ENCODE measurements at regions of chr12 and their contacts with region 1.

Region 1: GRCh38 chr12:69585189-69586062 is at the start of gene CCT2:
- DNase-seq: peak; percentile 97
- H3K4me3 ChIP-seq: peak within 1 kb of the TSS; percentile 16 to 98 (median 97)
- H3K27ac ChIP-seq: peak within 1 kb of the TSS; percentile 61
- H3K4me1 ChIP-seq: peaks cover 8% of the 10 kb centered on the region
- H3K27me3 ChIP-seq: no peaks in the 10 kb centered on the region
- CTCF ChIP-seq: peak in 1 of 2 donors; percentile 62
- POLR2A ChIP-seq: peak; percentile 93
- total RNA-seq, gene CCT2: 245 and 256 TPM in 2 replicates

Region 2: DNA sequence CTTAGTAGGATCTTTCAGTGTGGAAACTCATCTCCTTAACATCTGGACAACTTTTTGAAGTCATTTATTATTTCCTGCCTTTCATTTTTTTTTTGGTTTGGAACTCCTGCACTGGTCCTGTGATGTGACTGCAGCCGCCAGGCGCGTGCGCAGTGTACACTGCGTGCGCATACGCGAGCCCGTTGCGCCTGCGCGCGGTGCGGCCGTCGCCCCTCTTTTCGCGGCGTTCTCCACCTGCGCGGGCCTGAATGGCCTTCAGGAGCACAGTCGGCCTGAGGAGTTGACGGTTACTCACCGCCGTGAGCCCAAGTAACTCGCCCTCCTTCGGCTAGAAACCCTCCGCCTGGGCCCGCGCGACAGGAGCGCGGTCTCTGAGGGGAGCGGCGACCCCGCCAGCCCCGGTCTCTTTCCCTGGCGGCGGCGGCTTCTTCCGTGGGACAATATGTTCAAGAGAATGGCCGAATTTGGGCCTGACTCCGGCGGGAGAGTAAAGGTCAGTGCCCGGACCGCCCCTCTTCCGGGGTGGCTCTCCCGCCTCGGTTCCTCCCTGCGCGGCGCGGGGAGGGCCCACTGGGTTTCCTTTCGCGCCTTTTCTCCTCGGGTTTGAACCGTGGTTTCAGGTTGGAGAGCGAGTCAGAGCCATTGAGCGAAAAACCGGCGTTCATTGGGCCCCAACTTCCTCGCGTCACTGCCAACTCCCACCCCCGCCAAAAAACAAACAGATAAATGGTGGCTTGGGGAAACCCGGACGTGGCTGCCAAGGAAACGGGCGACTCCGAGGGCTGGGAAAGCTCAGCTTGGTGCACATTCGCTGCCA is 225.7 kb before region 1 on chr12 and contains the start of gene YEATS4:
- CTCF ChIA-PET with region 1: interaction called, 6 read pairs
- POLR2A ChIA-PET with region 1: no interaction called
- dilution Hi-C with region 1: no loop called
- intact Hi-C with region 1: loop called (anchors 1 kb)
- DNase-seq: peak; percentile 92
- H3K4me3 ChIP-seq: peak within 1 kb of the TSS; percentile 6 to 89 (median 65)
- H3K27ac ChIP-seq: peak within 1 kb of the TSS; percentile 69
- H3K4me1 ChIP-seq: peaks cover 7% of the 10 kb centered on the region
- H3K27me3 ChIP-seq: no peaks in the 10 kb centered on the region
- CTCF ChIP-seq: no peak
- POLR2A ChIP-seq: peak; percentile 68
- total RNA-seq, gene YEATS4: 16.5 and 16.7 TPM in 2 replicates

Region 3: DNA sequence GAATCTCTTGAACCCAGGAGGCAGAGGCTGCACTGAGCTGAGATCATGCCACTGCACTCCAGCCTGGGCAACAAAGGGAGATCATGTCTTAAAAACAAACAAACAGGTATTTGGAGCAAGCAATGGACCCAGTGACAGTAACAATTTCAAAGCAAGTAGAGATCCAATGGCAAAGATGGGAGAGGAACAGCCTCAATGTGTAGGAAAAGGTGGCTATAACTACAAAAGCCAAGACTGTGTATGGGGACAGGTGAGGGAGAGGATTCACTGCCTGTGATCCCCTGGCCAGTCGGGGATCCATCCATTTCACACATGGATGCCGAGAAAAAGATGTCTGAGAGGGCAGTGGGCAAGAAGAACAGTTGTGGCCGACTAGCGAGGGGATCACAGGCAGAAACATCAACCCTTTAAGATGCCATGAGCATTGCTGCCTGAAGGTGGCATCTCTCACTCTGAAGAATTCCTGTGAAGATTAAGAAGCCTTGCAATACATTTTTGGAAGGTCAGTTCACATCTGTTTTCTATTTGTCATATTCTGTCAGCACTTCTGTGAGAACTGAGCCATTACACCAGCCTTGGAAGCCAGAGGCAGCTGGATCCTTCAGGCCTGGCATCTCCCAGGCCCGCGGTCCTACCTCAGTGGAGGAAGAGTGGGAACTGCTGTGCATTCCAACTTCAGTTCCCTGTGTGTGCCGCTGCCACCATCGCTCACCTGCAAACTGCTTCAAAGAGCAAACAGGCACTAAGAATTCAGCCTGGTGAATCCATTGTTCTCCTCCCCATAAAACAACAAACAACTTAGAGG is 169.8 kb before region 1 on chr12:
- CTCF ChIA-PET with region 1: no interaction called
- POLR2A ChIA-PET with region 1: no interaction called
- dilution Hi-C with region 1: no loop called
- intact Hi-C with region 1: loop called (anchors 5 kb)
- DNase-seq: peak; percentile 70
- H3K4me3 ChIP-seq: no peak overlapping the region
- H3K27ac ChIP-seq: no peak overlapping the region
- H3K4me1 ChIP-seq: no peaks in the 10 kb centered on the region
- H3K27me3 ChIP-seq: no peaks in the 10 kb centered on the region
- CTCF ChIP-seq: peak; percentile 66 to 71
- POLR2A ChIP-seq: no peak

Region 4: DNA sequence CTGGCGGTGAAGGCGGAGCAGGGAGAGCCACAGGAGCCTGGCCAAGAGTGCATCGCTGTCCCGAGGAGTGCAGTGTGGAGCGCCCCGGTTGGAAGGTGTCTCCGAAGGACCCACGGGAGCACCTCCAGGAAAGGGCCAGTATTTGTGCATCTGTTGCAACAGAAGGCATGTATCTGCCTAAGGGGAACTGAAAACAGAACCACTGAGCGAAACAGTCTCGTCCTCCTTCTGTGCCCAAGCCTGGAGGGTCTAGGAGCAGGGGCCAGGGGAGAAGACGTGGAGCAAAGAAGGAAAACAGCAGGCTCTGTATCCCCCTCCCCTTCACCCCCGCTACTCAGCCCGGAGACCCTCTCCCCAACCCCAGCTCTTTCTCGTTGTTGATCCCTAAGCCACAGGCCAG is 30.6 kb after region 1 on chr12:
- CTCF ChIA-PET with region 1: no interaction called
- POLR2A ChIA-PET with region 1: no interaction called
- dilution Hi-C with region 1: no loop called
- intact Hi-C with region 1: no loop called
- DNase-seq: no peak
- H3K4me3 ChIP-seq: no peak overlapping the region
- H3K27ac ChIP-seq: no peak overlapping the region
- H3K4me1 ChIP-seq: no peaks in the 10 kb centered on the region
- H3K27me3 ChIP-seq: peaks cover 0 to 11% of the 10 kb centered on the region in 2 experiments
- CTCF ChIP-seq: no peak
- POLR2A ChIP-seq: no peak

Region 5: GRCh38 chr12:69688496-69689427 is 103.3 kb after region 1 on chr12:
- CTCF ChIA-PET with region 1: no interaction called
- POLR2A ChIA-PET with region 1: no interaction called
- dilution Hi-C with region 1: no loop called
- intact Hi-C with region 1: loop called (anchors 1 kb)
- DNase-seq: peak; percentile 96
- H3K4me3 ChIP-seq: no peak overlapping the region
- H3K27ac ChIP-seq: peak overlapping the region; percentile 81
- H3K4me1 ChIP-seq: peaks cover 28% of the 10 kb centered on the region
- H3K27me3 ChIP-seq: no peaks in the 10 kb centered on the region
- CTCF ChIP-seq: no peak
- POLR2A ChIP-seq: peak; percentile 32

Region 6: GRCh38 chr12:69837191-69837590 is 251.8 kb after region 1 on chr12:
- CTCF ChIA-PET with region 1: no interaction called
- POLR2A ChIA-PET with region 1: no interaction called
- dilution Hi-C with region 1: no loop called
- intact Hi-C with region 1: no loop called
- DNase-seq: no peak
- H3K4me3 ChIP-seq: no peak overlapping the region
- H3K27ac ChIP-seq: no peak overlapping the region
- H3K4me1 ChIP-seq: no peaks in the 10 kb centered on the region
- H3K27me3 ChIP-seq: peaks cover 0 to 3% of the 10 kb centered on the region in 2 experiments
- CTCF ChIP-seq: no peak
- POLR2A ChIP-seq: no peak

Region 7: GRCh38 chr12:70242695-70243509 is 657.5 kb after region 1 on chr12 and contains the start of gene CNOT2:
- CTCF ChIA-PET with region 1: no interaction called
- POLR2A ChIA-PET with region 1: no interaction called
- dilution Hi-C with region 1: no loop called
- intact Hi-C with region 1: loop called (anchors 5 kb)
- DNase-seq: peak; percentile 93
- H3K4me3 ChIP-seq: peak within 1 kb of the TSS; percentile 83 to 97 (median 84)
- H3K27ac ChIP-seq: peak within 1 kb of the TSS; percentile 86
- H3K4me1 ChIP-seq: peaks cover 47% of the 10 kb centered on the region
- H3K27me3 ChIP-seq: no peaks in the 10 kb centered on the region
- CTCF ChIP-seq: no peak
- POLR2A ChIP-seq: peak; percentile 35
- total RNA-seq, gene CNOT2: 79.1 and 79.7 TPM in 2 replicates

Measured in endothelial cell of umbilical vein (primary cell).